ENCODE measurements at regions of chr2 and their contacts with region 1.

Region 1: DNA sequence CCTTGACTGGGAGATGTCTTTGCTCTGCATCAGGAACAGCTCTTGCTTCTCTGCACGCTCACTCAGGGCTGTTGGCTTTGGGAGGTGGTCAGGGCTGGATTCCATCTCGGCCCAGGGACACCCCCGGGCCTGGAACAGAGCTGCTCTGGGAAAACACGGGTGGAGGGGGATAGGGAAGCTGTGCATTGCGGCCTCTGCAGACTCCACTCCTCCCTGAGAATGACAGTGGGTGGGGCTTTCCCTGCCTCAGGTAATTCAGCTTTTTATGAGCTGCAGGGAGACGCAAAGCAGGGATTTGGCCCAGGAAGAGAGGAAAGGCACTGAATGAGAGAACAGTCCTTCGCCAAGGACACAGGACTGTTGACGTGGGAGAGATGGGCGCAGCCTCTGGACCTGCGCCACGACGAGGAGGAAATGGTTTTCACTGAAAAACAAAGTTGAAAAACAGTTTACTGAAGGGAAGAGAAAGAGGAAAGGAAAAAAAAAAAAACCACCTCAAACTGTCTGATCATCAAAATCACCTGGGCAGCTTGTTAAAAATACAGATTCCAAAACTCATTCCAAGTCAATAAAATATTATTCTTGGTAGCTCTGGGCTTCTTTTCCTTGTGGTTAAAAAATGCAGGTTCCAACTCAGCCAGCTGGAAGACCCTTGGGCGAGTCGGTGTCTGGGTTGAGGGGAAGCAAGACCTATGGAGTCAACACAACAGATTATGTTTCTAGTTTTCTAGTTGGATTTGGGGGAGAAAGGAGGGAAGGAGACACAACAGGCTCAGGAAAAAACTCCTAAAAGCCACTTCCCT is 194.0 kb downstream of the ZFP36L2 start:
- DNase-seq: peak; percentile 87 to 91 (median 89)
- H3K4me3 ChIP-seq: no peak overlapping the region
- H3K27ac ChIP-seq: peak overlapping the region; percentile 76 to 92
- H3K4me1 ChIP-seq: peaks cover 16% of the 10 kb centered on the region
- H3K27me3 ChIP-seq: no peaks in the 10 kb centered on the region
- CTCF ChIP-seq: no peak
- EP300 ChIP-seq: no peak
- POLR2A ChIP-seq: peak; percentile 18

Region 2: GRCh38 chr2:43105586-43106558 is 73.5 kb after region 1 on chr2:
- intact Hi-C with region 1: loop called in 1 of 4 experiments (anchors 10 kb)
- DNase-seq: peak; percentile 47 to 71 (median 64)
- H3K4me3 ChIP-seq: no peak overlapping the region
- H3K27ac ChIP-seq: peak overlapping the region; percentile 54 to 60
- H3K4me1 ChIP-seq: peaks cover 41% of the 10 kb centered on the region
- H3K27me3 ChIP-seq: no peaks in the 10 kb centered on the region
- CTCF ChIP-seq: peak in 1 of 3 donors; percentile 51
- EP300 ChIP-seq: no peak
- POLR2A ChIP-seq: peak; percentile 7

Region 3: GRCh38 chr2:43184339-43184895 is 152.0 kb after region 1 on chr2:
- intact Hi-C with region 1: no loop called
- DNase-seq: no peak
- H3K4me3 ChIP-seq: no peak overlapping the region
- H3K27ac ChIP-seq: no peak overlapping the region
- H3K4me1 ChIP-seq: no peaks in the 10 kb centered on the region
- H3K27me3 ChIP-seq: no peaks in the 10 kb centered on the region
- CTCF ChIP-seq: no peak
- EP300 ChIP-seq: no peak
- POLR2A ChIP-seq: no peak

Measured in ovary (tissue), 10 donors.